ENCODE measurements at regions of chr16 and their contacts with region 1.

Region 1: DNA sequence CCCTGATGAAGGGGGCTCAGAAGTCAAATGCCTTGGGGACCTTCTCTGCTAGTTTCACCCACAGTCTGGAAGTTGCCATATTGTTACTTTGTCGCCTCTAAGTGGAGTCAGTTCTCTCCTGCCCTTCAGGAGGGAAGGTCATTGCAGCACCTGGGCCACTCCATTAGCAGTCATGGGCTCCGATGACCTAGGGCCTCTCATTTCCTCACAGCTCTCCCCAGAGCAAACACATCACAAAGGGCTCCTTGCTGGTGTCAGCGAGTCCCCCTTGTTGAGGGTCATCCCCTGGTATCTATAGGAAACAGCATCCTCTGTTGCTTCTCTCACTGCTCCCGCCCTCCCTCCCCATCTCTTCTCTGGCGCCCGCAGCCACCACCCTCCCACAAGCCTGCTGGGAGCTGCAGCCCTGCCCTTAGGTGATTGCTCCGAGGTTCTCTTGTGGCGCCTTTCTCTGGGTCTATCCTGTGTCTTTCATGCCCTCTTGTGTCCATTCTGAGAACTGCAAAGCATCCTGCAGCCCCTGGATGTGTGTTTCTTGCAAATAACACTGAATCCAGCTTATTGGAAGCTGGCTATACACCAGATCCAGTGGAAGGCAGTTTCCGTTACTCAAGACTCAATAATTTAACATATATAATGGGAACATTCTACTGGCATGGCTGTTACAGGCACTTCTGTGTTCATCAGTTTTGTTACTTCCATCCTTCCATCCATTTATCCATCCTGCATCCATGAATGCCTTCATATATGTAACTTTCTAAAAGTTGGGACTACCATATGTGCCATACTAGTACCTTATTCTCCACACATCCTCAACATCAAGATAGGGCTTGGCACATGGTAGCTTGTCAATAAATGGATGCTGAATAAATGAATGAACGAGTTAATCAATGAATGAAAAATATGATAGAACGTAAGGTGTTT is 21.2 kb downstream of the PDILT start:
- H3K4me3 ChIP-seq: no peak overlapping the region
- H3K27ac ChIP-seq: no peak overlapping the region
- H3K4me1 ChIP-seq: no peaks in the 10 kb centered on the region
- CTCF ChIP-seq: no peak

Region 2: DNA sequence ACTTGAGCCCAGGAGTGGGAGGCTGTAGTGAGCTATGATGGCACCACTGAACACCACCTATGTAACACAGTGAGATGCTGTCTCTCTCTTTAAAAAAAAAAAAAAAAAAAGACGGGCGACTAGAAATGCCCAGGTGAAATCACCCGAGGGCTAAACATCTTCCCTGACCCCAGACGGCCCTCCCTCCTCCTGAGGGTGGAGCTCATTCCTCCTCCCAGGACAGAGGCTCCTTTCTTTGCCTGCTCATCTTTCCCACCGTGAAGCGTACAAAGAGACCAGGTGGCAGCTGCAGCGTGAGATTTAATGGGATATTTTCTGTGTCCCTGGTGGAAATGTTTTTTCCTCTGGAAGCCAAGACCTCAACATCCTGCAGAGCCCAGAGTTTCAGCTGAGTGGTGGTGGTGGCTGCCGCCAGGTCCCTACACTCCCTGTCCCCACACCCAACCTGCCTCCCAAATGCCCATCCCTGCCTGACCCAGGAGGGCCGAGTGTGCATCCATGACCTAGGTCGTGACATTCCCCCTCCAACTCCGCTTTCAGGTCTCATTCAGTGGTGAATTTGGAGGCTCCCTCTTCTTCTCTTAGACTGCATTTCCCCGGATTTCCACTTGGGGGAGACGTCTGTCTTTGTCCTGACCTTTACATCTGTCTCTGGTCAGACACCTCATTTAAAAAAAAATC is 484.3 kb before region 1 on chr16:
- CTCF ChIA-PET with region 1: interaction called, 21 read pairs
- POLR2A ChIA-PET with region 1: no interaction called
- H3K4me3 ChIP-seq: no peak overlapping the region
- H3K27ac ChIP-seq: no peak overlapping the region
- H3K4me1 ChIP-seq: no peaks in the 10 kb centered on the region
- CTCF ChIP-seq: peak; percentile 34

Region 3: DNA sequence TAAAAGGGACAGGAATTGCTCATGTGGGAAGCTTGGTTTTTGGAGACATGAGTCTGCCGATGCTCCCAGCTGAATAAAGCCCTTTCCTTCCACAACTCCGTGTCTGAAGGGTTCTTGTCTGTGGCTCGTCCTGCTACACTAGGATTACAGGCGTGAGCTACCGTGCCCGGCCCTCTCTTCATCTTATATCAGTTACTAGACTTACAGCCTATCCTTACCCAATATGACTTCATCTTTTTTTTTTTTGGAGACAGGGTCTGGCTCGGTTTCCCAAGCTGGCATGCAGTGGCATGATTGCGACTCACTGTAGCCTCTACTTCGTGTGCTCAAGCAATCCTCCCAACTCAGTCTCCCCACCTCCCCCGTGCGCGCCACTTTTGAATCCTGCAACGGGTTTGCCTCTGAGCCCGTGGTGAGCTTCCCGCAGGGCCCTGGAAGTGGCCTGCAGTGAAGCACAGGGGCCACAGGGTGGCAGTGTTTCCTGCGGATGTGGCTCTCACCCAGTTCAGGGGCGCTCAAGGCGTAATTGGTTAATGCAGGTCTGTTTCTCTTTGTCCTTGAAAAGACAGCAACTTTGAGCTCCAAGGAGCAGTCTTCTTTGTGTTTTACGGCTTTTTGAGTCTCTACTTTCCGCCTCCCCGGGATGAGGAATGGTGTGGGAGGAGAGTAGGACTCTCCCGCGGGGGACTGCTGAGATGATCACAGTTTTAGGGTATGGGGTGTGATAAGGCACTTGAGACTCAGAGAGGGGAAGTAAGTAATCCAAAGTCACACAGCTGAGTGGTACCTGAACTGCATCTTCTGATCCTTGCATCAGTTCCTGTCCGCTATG is 476.0 kb before region 1 on chr16:
- CTCF ChIA-PET with region 1: interaction called, 99 read pairs
- POLR2A ChIA-PET with region 1: no interaction called
- H3K4me3 ChIP-seq: no peak overlapping the region
- H3K27ac ChIP-seq: no peak overlapping the region
- H3K4me1 ChIP-seq: no peaks in the 10 kb centered on the region
- CTCF ChIP-seq: peak; percentile 89

Region 4: DNA sequence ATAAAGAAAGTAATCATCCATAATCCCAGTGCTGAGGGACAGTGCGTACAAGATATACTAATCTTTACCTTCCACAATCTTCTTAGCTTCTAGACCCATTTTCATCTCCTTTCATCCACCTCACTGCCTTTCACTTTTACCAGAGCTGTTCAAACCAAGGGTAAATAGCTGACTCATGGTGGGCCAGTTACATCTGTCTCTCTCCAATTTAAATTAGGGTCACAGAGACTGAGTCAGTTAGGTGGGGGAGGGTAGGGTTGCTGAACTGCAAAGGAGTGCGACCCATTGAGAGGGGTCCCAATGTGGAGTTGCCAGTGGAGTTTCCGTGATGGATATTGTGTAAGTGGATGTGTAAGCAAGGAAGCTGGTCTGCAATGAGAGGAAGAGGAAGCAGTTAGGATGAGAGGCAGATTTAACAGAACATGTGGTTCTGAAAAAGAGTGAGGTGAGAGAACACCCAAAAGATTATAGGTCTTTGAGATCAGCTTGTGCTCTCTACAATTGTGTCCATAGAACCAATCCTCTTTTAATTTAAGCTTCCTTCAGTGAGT is 139.6 kb before region 1 on chr16:
- CTCF ChIA-PET with region 1: no interaction called
- POLR2A ChIA-PET with region 1: no interaction called
- H3K4me3 ChIP-seq: no peak overlapping the region
- H3K27ac ChIP-seq: no peak overlapping the region
- H3K4me1 ChIP-seq: no peaks in the 10 kb centered on the region
- CTCF ChIP-seq: no peak

Region 5: DNA sequence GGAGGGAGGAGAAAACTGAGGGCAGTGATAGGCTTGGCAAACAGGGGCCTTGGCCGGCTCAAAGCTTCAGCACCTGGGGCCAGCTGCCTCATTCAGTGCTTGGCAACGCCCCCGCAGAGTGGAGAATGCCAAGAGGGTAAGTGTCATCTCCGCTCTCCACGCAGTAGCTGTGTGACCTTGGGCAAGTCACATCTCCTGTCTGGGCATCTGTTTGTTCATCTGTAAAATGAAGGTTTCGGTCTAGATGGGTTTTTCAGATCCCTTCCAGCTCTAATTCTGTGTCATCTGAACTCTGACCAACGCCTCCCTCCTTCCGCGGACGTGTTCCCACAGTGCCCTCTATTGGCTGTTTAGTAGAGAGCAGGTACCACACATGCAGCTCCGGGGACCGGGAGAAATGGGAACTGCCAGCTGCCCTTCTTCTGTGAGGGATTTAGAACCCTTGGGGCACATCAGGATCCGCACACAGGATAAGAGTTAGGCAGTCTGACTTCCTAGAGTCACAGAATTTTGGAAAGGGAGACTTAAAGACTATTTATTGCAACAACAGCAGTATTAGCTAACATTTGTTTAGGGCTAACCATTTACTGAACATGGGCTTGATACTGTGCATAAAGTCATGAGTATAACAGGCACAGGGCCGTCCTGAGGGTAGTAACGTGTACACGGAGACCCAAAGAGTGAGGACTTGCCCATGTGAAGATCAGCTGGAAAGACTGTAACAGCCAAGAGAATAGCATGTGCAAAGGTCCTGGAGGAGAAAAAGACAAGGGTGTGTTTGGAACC is 82.9 kb before region 1 on chr16:
- CTCF ChIA-PET with region 1: interaction called, 33 read pairs
- POLR2A ChIA-PET with region 1: no interaction called
- H3K4me3 ChIP-seq: no peak overlapping the region
- H3K27ac ChIP-seq: no peak overlapping the region
- H3K4me1 ChIP-seq: no peaks in the 10 kb centered on the region
- CTCF ChIP-seq: 0 out of 2 replicates have a peak, but pooled peaks have one; percentile 16

Region 6: GRCh38 chr16:20359997-20360396 is 23.4 kb before region 1 on chr16:
- CTCF ChIA-PET with region 1: interaction called, 21 read pairs
- POLR2A ChIA-PET with region 1: no interaction called
- H3K4me3 ChIP-seq: no peak overlapping the region
- H3K27ac ChIP-seq: no peak overlapping the region
- H3K4me1 ChIP-seq: no peaks in the 10 kb centered on the region
- CTCF ChIP-seq: no peak

Region 7: GRCh38 chr16:20393801-20394577 is 10.6 kb after region 1 on chr16:
- CTCF ChIA-PET with region 1: interaction called, 19 read pairs
- POLR2A ChIA-PET with region 1: no interaction called
- H3K4me3 ChIP-seq: no peak overlapping the region
- H3K27ac ChIP-seq: no peak overlapping the region
- H3K4me1 ChIP-seq: no peaks in the 10 kb centered on the region
- CTCF ChIP-seq: no peak